Activated CD4-positive, alpha-beta memory T cell treated with anti-CD3 and anti-CD28 coated beads for 36 hours (primary cell): ENCODE measurements at regions of chr14 and their contacts with region 1.

Region 1: GRCh38 chr14:99192028-99192621 is 79.9 kb downstream of the BCL11B start:
- DNase-seq: peak; percentile 56
- H3K4me3 Mint-ChIP-seq: peak overlapping the region; percentile 84
- H3K27ac Mint-ChIP-seq: peak overlapping the region; percentile 88
- H3K4me1 Mint-ChIP-seq: peaks cover 92% of the 10 kb centered on the region
- H3K27me3 Mint-ChIP-seq: no peaks in the 10 kb centered on the region

Region 2: GRCh38 chr14:97707603-97708002 is 1484.5 kb before region 1 on chr14:
- CTCF ChIA-PET with region 1: no interaction called
- POLR2A ChIA-PET with region 1: no interaction called
- intact Hi-C with region 1: loop called (anchors 10 kb)
- DNase-seq: peak; percentile 60
- H3K4me3 Mint-ChIP-seq: no peak overlapping the region
- H3K27ac Mint-ChIP-seq: no peak overlapping the region
- H3K4me1 Mint-ChIP-seq: peaks cover 90% of the 10 kb centered on the region
- H3K27me3 Mint-ChIP-seq: no peaks in the 10 kb centered on the region

Region 3: DNA sequence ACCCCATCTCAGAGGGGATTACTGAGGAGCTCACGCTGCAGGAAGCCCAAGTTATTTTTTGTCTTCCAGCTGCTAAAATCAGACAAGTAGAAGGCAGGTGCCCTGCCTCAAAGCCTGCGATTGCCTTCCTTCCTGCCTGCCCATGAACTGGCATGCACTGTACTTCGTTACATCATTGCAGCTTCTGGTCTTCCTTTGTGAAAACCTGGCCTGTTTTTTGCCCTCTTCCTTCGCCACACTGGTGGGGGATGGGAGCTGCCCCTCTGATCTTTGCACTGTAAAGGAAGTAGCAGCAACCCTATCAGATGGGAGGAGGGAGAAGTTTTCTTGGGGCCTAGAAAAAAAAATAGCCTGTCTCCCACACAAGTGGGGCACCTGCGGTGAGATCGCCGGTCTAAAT is 1018.8 kb before region 1 on chr14:
- CTCF ChIA-PET with region 1: interaction called, 5 read pairs
- POLR2A ChIA-PET with region 1: no interaction called
- intact Hi-C with region 1: loop called (anchors 5 kb)
- DNase-seq: peak; percentile 67
- H3K4me3 Mint-ChIP-seq: peak overlapping the region; percentile 62
- H3K27ac Mint-ChIP-seq: peak overlapping the region; percentile 98
- H3K4me1 Mint-ChIP-seq: peaks cover 98% of the 10 kb centered on the region
- H3K27me3 Mint-ChIP-seq: no peaks in the 10 kb centered on the region

Region 4: GRCh38 chr14:98994561-98994960 is 197.6 kb before region 1 on chr14:
- CTCF ChIA-PET with region 1: no interaction called
- POLR2A ChIA-PET with region 1: no interaction called
- intact Hi-C with region 1: loop called (anchors 10 kb)
- DNase-seq: no peak
- H3K4me3 Mint-ChIP-seq: no peak overlapping the region
- H3K27ac Mint-ChIP-seq: peak overlapping the region; percentile 57
- H3K4me1 Mint-ChIP-seq: peaks cover 21% of the 10 kb centered on the region
- H3K27me3 Mint-ChIP-seq: no peaks in the 10 kb centered on the region

Region 5: DNA sequence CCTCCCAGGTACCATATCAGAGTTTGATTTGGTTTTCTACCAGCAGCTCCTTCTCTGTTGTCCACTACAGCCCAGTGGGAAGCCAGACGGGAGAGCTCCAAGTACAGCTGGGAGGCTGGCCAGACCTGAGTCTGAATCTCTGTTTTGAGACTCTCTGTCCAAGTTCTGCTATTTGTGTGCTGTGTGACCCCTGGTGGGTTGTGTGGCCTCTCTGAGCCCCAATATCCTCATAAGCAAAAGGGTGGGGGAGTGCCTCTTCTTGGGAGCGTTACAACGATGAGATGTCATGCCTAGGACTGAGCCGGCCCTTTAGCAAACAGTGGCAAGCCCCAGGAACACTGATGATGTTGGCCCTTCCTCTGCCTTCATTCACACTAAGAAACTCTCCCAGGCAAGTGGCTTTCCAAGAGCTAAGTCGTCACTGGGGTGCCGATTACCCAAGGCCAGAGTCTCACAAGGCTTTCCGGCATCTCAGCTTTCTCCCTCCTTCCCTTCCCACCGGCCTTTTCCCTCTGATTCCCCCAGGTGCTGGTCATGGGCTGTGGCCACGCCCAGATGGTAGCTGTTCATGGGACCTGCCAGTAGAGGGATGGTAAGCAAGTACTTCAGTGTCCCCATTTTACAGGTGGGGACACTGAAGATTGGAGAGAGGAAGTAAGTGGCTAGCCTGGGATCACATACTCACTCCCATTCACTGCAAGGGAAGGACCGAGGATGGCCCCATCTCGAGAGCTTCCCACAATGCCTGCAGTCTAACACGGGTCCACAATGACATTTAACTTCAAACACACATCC is 32.2 kb after region 1 on chr14:
- CTCF ChIA-PET with region 1: interaction called, 18 read pairs
- POLR2A ChIA-PET with region 1: interaction called, 3 read pairs
- intact Hi-C with region 1: no loop called
- DNase-seq: peak; percentile 47
- H3K4me3 Mint-ChIP-seq: peak overlapping the region; percentile 36
- H3K27ac Mint-ChIP-seq: peak overlapping the region; percentile 96
- H3K4me1 Mint-ChIP-seq: peaks cover 92% of the 10 kb centered on the region
- H3K27me3 Mint-ChIP-seq: no peaks in the 10 kb centered on the region

Region 6: DNA sequence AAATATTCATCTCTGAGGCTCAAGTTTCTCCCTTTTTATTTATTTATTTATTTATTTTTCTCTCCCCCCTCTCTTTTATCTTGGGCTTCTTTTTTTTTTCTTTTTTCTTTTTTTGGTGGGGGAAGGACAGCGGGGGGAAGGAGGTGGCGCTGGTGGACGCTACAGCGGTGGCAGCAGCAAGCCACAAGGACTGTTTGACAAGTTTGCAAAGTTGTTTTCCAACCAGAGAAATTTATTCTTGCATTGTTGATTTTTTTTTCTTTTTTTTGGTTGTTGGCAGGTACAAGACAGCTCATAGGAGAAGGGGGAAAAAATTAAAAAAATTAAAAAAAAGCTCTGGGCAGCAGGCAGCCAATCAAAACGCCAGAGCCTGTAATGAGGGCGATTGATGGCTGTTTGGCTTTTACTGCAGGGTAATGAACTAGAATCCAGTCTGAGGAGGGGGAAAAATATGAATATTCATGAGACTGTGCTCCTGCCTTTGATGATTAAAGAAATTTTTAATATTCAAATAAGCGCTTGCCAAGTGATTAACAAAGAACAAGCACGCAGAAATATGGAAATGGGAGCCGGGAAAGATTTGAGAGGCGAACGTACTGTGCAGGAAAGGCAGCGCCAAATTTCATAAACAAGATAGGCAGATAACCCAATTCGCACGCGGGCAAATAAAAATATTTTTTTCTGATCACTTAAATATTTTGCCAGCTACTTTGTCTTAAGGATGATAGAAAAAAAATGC is 43.6 kb after region 1 on chr14:
- CTCF ChIA-PET with region 1: interaction called, 61 read pairs
- POLR2A ChIA-PET with region 1: interaction called, 24 read pairs
- intact Hi-C with region 1: loop called (anchors 1 kb)
- DNase-seq: no peak
- H3K4me3 Mint-ChIP-seq: peak overlapping the region; percentile 76
- H3K27ac Mint-ChIP-seq: peak overlapping the region; percentile 96
- H3K4me1 Mint-ChIP-seq: peaks cover 91% of the 10 kb centered on the region
- H3K27me3 Mint-ChIP-seq: no peaks in the 10 kb centered on the region

Region 7: DNA sequence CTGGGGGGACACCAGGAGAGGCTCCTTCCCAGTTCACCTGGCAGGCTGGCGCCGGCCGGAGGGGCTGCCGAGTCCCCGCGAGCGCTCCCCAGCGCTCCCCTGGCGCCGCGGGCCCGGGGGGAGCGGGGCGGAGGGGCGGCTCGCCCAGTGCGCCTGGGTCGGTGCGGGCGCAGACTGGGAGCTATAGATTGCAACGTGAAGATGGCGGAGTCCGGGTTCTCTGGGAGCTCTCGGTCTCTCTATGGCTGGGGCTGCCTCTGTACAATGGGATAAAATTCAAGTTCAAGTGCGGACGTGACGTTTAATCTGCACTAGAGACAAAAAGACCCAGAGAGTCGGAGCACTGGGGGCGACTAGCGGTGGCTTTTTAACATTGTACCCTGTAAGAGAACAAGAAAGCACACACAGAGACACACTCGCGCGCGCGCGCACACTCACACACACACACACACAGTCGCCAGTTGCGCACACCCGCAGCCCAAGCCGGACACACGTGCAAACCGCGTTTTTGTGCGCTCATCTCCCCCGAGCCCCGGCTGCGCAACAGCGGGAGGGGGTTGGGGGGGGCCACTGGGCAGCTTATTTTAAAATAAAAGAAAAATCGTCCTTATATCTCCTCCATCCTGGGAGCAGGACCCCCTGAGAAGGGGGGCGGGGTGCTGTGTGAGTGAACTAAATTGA is 80.0 kb after region 1 on chr14 and contains the start of gene BCL11B:
- CTCF ChIA-PET with region 1: interaction called, 130 read pairs
- POLR2A ChIA-PET with region 1: interaction called, 49 read pairs
- intact Hi-C with region 1: no loop called
- DNase-seq: peak; percentile 95
- H3K4me3 Mint-ChIP-seq: peak within 1 kb of the TSS; percentile 96
- H3K27ac Mint-ChIP-seq: peak within 1 kb of the TSS; percentile 100
- H3K4me1 Mint-ChIP-seq: peaks cover 29% of the 10 kb centered on the region
- H3K27me3 Mint-ChIP-seq: peaks cover 3% of the 10 kb centered on the region
- total RNA-seq, gene BCL11B: 48.9 to 49.1 TPM